Heart right ventricle (tissue), 16 donors: ENCODE measurements at regions of chr6 and their contacts with region 1.

Region 1: DNA sequence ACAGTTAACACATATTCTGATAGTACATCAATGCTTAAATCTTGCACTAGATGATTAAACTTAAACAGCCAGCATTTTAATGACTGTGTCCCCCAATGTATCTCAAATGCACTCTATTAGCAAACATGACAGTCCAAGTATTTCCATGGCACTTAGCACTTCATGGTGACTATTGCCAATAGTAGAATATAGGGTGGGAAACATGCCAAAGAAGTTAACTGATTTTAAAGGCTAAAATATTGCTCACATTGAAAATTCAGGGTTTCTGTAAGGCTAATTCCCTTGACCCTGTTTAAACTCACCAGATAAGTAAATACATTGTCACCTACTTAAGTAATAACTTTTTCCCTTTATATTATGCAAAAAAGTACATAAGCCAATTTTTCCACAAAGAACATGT is 266.9 kb downstream of the TBC1D32 start:
- DNase-seq: no peak
- ATAC-seq: no peak
- H3K4me3 ChIP-seq: no peak overlapping the region
- H3K27ac ChIP-seq: no peak overlapping the region
- H3K4me1 ChIP-seq: no peaks in the 10 kb centered on the region
- H3K27me3 ChIP-seq: no peaks in the 10 kb centered on the region
- CTCF ChIP-seq: no peak

Region 2: DNA sequence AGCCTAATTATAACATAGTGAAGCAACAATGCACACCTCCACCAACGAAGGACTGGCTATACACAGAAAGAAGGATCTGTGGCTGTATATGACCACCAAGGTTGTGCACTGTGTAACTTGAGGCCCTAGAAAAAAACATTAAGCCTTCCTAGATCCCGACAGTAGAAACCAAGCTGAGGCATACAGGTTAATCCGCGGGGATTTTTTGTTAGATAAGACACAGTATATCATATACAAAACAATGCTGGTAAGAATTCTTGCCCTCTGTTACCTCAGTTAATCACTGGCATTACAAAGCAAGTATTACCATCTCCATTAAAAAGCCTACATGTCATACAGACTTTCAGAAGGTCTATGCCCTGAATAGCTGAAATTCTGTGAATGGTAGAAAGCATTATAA is 38.1 kb after region 1 on chr6:
- intact Hi-C with region 1: no loop called
- DNase-seq: no peak
- ATAC-seq: no peak
- H3K4me3 ChIP-seq: no peak overlapping the region
- H3K27ac ChIP-seq: no peak overlapping the region
- H3K4me1 ChIP-seq: no peaks in the 10 kb centered on the region
- H3K27me3 ChIP-seq: no peaks in the 10 kb centered on the region
- CTCF ChIP-seq: no peak

Region 3: DNA sequence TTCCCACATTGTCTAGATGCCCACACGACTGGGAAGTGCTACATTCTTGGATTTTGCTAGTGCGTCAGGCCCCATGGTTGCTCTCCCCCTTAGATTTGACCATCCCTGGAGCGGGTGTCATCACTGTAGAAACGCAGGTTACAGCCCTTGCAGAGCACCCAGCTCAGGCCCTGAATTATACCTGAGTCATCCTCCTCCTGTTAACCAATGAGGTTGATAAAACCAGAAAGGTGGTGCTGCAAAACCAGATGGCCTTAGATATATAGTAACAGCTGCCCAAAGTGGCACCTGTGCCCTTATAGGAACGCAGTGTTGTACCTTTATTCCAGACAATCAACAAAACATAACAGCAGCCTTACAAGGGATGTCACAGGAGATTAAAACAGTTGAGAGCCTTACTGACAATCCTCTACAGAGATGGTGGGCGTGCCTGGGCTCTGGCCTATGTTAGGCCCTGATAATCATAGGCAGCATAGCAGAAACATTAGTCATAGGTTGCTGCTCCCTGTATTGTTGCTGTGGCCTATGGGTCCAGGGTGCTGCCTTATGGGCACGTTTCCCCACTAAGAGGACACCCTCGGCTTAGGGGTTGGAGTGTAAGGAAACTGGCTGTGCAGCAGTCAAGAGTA is 1298.5 kb after region 1 on chr6:
- intact Hi-C with region 1: loop called in 1 of 10 experiments (anchors 10 kb)
- DNase-seq: no peak
- ATAC-seq: peak in 2 of 8 donors; percentile 34 to 48
- H3K4me3 ChIP-seq: no peak overlapping the region
- H3K27ac ChIP-seq: no peak overlapping the region
- H3K4me1 ChIP-seq: no peaks in the 10 kb centered on the region
- H3K27me3 ChIP-seq: peaks cover 0 to under 1% (median 0%) of the 10 kb centered on the region in 7 donors
- CTCF ChIP-seq: no peak